GM12878 (cell line): ENCODE measurements at regions of chr17 and their contacts with region 1.

Region 1: GRCh38 chr17:16199093-16199492 is 16.2 kb downstream of the NCOR1 start:
- DNase-seq: no peak
- ATAC-seq: no peak
- H3K4me3 ChIP-seq: peak overlapping the region; percentile 33; the same call in 1 of the 2 replicates
- H3K27ac ChIP-seq: peak overlapping the region; percentile 58; the same call in 1 of the 2 replicates
- H3K4me1 ChIP-seq: peaks cover 3% of the 10 kb centered on the region
- H3K27me3 ChIP-seq: no peaks in the 10 kb centered on the region
- CTCF ChIP-seq: no peak
- EP300 ChIP-seq: no peak
- POLR2A ChIP-seq: no peak
- RAD21 ChIP-seq: no peak

Region 2: GRCh38 chr17:16148596-16148995 is 50.5 kb before region 1 on chr17:
- CTCF ChIA-PET with region 1: interaction called, 3 read pairs
- POLR2A ChIA-PET with region 1: interaction called, 4 read pairs
- RAD21 ChIA-PET with region 1: no interaction called
- SMC1A ChIA-PET with region 1: no interaction called
- in situ Hi-C with region 1: no loop called
- intact Hi-C with region 1: loop called (anchors 5 kb)
- DNase-seq: no peak
- ATAC-seq: no peak
- H3K4me3 ChIP-seq: no peak overlapping the region
- H3K27ac ChIP-seq: no peak overlapping the region
- H3K4me1 ChIP-seq: no peaks in the 10 kb centered on the region
- H3K27me3 ChIP-seq: no peaks in the 10 kb centered on the region
- CTCF ChIP-seq: no peak
- EP300 ChIP-seq: no peak
- POLR2A ChIP-seq: no peak
- RAD21 ChIP-seq: no peak

Region 3: GRCh38 chr17:16215273-16215964 is 16.3 kb after region 1 on chr17 and contains the start of gene NCOR1:
- CTCF ChIA-PET with region 1: interaction called, 7 read pairs
- POLR2A ChIA-PET with region 1: interaction called, 3 read pairs
- RAD21 ChIA-PET with region 1: interaction called, 11 read pairs
- SMC1A ChIA-PET with region 1: interaction called, 8 read pairs
- in situ Hi-C with region 1: no loop called
- intact Hi-C with region 1: no loop called
- DNase-seq: no peak
- ATAC-seq: peak; percentile 90
- H3K4me3 ChIP-seq: peak within 1 kb of the TSS; percentile 91
- H3K27ac ChIP-seq: peak within 1 kb of the TSS; percentile 96
- H3K4me1 ChIP-seq: peaks cover 4% of the 10 kb centered on the region
- H3K27me3 ChIP-seq: no peaks in the 10 kb centered on the region
- CTCF ChIP-seq: peak; percentile 13 to 38 (median 33); a peak in 3 of 6 replicates
- EP300 ChIP-seq: no peak
- POLR2A ChIP-seq: peak; percentile 97
- RAD21 ChIP-seq: peak; percentile 33
- polyA plus RNA-seq, gene NCOR1: 34.5 to 55.1 TPM